Activated B cell treated with CpG ODN at 0.5 μM for 24 hours (primary cell): ENCODE measurements at regions of chr20 and their contacts with region 1.

Region 1: DNA sequence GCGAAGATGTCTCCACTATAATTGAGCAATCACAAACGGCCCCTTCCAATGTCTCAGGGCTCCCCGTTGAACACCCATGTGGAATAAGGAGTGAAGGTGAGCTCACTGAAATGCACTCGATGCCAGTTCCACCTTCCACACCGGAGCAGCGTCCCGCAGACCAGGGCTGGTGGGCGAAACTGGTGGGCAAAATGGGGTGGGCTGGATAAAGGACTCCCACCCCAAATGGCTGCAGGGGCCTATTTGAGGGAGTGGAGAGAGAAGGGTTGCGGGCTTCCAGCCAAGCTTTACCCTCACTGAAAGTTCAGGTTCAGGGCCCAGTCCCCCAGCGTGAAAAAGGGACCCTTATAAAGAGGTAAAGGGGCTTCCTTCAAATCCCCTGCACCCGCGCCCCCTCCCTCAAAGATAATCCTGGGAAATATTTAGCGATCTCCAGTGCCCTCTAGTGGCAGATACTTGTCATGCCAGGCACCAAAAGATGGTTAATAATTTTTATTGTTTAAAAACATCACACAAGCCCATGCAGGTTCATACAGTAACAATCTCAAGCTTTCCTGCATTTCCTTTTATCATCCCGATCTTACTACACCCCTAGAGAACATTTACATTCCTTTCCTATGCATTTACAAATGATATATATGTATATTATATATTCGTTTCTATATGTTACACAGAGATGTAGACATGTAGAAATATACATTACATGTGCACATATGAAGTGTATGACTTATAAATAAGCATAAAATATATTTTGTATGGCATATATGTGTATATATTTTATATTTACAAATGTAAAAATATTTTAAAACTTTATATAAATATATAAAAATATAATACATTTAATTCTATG is 58.2 kb upstream of the NKX2-2 start:
- DNase-seq: no peak
- ATAC-seq: no peak
- H3K4me3 Mint-ChIP-seq: no peak overlapping the region
- H3K27ac Mint-ChIP-seq: no peak overlapping the region
- H3K4me1 Mint-ChIP-seq: no peaks in the 10 kb centered on the region
- H3K27me3 Mint-ChIP-seq: peaks cover 21% of the 10 kb centered on the region
- CTCF ChIP-seq: peak; percentile 98

Region 2: GRCh38 chr20:20860078-20860806 is 711.8 kb before region 1 on chr20:
- CTCF ChIA-PET with region 1: interaction called, 11 read pairs
- POLR2A ChIA-PET with region 1: no interaction called
- intact Hi-C with region 1: loop called (anchors 1 kb)
- DNase-seq: peak; percentile 60
- ATAC-seq: peak; percentile 21
- H3K4me3 Mint-ChIP-seq: no peak overlapping the region
- H3K27ac Mint-ChIP-seq: no peak overlapping the region
- H3K4me1 Mint-ChIP-seq: no peaks in the 10 kb centered on the region
- H3K27me3 Mint-ChIP-seq: peaks cover 25% of the 10 kb centered on the region
- CTCF ChIP-seq: no peak